GM23248 (cell line): ENCODE measurements at regions of chr1 and their contacts with region 1.

Region 1: GRCh38 chr1:56709269-56709880 is 64.3 kb downstream of the PRKAA2 start:
- DNase-seq: peak; percentile 64
- H3K4me3 ChIP-seq: no peak overlapping the region
- H3K27ac ChIP-seq: no peak overlapping the region
- H3K4me1 ChIP-seq: peaks cover 21% of the 10 kb centered on the region
- H3K27me3 ChIP-seq: no peaks in the 10 kb centered on the region

Region 2: DNA sequence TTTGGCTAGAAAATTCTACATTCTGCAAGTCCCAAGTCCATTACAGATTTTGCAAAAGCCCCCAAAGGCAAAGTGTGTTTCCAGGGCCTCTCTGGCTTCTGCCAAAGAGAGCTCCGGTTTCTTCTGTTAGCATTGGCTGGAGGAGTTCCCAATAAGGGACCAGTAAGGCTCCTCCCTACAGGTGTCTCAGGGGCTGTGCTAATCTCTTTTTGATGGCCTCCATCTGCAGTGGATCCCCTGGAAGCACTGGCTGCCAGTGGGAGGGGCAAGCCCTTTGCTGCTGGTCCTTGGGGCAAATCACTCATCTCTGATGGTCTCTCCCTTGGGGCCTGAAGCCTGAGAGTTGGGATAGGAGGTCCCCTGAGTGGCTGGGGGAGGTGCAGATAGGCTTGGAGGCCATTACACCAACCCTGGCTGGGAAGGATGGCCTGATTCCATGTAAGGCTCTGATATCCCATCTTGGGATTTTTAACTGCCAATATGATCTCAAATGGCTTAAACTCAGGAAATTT is 1405.1 kb before region 1 on chr1:
- in situ Hi-C with region 1: loop called (anchors 10 kb)
- DNase-seq: no peak
- H3K4me3 ChIP-seq: no peak overlapping the region
- H3K27ac ChIP-seq: no peak overlapping the region
- H3K4me1 ChIP-seq: 0 out of 2 replicates have a peak, but pooled peaks cover 4% of the 10 kb centered on the region
- H3K27me3 ChIP-seq: peaks cover 19% of the 10 kb centered on the region

Region 3: GRCh38 chr1:56330391-56331026 is 378.9 kb before region 1 on chr1:
- in situ Hi-C with region 1: no loop called
- DNase-seq: peak; percentile 68
- H3K4me3 ChIP-seq: no peak overlapping the region
- H3K27ac ChIP-seq: no peak overlapping the region
- H3K4me1 ChIP-seq: peaks cover 24% of the 10 kb centered on the region
- H3K27me3 ChIP-seq: no peaks in the 10 kb centered on the region